Posterior vena cava (tissue), 2 donors: ENCODE measurements at regions of chr11 and their contacts with region 1.

Region 1: DNA sequence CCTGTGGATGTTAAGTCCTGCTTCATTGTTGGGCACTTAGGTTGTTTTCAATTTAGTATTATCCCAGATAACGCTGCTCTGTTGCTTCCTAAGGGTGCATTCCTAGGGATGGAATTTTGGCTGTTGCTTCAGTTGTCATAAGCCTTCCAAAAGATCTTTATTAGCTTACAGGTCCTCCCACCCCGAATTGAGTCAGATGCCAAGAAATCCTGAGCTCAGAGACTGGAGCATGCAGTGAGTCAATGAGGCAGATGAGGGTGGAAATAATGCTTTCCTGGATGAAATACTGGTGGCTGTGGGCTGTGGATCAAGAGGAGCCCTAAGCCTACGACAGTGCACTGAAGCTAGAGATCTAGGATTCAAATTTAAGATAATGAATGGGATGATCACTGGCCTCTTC is 10.7 kb upstream of the IL18BP start:
- DNase-seq: no peak

Region 2: DNA sequence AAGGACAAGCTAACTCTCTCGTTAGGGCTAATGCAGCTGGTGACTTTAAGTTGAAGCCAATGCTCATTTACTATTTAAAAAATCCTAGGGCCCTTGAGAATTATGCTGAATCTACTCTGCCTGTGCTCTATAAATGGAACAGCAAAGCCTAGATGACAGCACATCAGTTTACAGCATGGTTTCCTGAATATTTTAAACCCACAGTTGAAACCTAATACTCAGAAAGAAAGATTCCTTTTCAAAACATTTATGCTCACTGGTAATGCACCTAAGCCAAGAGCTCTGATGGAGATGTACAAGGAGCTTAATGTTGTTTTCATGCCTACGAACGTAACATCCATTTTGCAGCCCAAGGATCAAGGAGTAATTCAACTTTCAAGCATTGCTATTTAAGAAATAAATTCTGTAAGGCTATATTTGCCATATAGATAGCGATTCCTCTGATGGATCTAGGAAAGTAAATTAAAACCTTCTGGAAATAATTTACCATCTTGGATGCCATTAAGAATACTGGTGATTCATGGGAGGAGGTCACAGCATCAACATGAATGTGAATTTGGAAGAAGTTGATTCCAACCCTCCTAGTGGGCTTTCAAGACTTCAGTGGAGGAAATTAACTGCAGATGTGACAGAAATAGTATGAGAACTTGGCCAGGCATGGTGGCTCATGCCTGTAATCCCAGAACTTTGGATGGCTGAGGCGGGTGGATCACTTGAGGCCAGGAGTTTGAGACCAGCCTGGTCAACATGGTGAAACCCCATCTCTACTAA is 74.1 kb before region 1 on chr11:
- intact Hi-C with region 1: no loop called
- DNase-seq: no peak

Region 3: GRCh38 chr11:71946144-71946571 is 41.9 kb before region 1 on chr11:
- intact Hi-C with region 1: loop called in 1 of 2 experiments (anchors 1 kb)
- DNase-seq: no peak